SK-N-SH (cell line): ENCODE measurements at regions of chr9 and their contacts with region 1.

Region 1: GRCh38 chr9:88738709-88739108 is 203.7 kb downstream of the NXNL2 start:
- DNase-seq: peak; percentile 56
- H3K4me3 ChIP-seq: no peak overlapping the region
- H3K27ac ChIP-seq: peak overlapping the region; percentile 33 to 97; a peak in 3 of 4 replicates
- H3K4me1 ChIP-seq: peaks cover 29 to 45% of the 10 kb centered on the region in 2 experiments
- H3K27me3 ChIP-seq: no peaks in the 10 kb centered on the region
- CTCF ChIP-seq: no peak
- EP300 ChIP-seq: peak; percentile 72 to 76
- RAD21 ChIP-seq: peak; percentile 18; the same call in 1 of the 2 replicates

Region 2: DNA sequence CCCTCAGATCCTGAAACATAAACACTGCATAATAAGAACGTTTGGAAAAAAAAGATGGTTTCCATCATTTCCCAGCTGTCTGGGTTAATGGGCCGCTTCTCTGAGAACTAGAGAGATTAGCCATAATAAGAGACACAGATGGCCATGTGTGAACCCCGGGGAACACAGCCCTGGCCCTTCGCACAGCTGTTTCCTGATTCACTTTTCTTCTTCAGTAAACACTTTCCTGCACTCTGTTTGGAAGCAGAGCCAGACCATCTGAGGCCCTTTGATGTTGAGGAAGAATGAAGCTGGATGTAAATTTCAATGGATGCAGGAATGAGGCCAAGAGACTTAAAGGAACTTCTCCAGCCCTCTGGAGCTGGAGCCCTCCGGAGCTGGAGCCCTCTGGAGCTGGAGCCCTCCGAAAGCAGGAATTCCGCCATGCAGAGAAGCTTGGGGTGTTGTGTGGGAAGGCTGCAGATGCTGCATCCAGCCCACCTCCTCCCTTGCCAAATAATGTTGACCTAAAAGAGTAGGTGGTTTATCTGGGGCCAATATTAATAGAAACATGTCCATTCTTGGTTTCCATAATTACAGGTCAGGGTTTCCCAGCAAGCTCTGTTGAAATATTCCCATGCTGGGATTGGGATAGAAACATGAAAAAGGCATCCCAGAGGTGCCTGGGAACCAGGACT is 15.1 kb after region 1 on chr9:
- CTCF ChIA-PET with region 1: interaction called, 10 read pairs
- POLR2A ChIA-PET with region 1: no interaction called
- DNase-seq: peak; percentile 82
- H3K4me3 ChIP-seq: no peak overlapping the region
- H3K27ac ChIP-seq: peak overlapping the region in 1 of 2 experiments; percentile 98; a peak in 2 of 4 replicates
- H3K4me1 ChIP-seq: peaks cover 5 to 44% of the 10 kb centered on the region in 2 experiments; a peak in 3 of 4 replicates
- H3K27me3 ChIP-seq: no peaks in the 10 kb centered on the region
- CTCF ChIP-seq: no peak
- EP300 ChIP-seq: peak in 1 of 2 experiments; percentile 95; a peak in 2 of 4 replicates
- RAD21 ChIP-seq: peak; percentile 32